BJ (cell line): ENCODE measurements at regions of chr3 and their contacts with region 1.

Region 1: DNA sequence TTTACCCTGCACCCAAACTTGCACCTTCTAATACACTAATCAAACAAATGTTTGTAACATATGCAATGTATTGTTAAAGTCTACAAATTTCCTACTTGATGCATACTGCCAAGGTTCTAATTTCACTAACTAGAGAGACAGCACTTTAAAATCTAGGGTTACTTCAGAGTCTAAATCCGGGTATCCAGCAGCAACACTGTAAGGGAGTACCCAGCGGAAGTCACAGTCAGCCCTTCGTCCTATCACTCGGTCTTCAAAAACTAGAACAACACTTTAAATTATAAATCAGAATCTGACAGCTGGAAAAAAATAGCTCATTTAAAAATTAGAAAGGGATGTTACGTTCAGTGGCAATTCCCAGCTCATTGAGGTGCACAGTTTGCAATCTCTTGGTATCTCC is 8.3 kb downstream of the TNIK start:
- DNase-seq: no peak
- H3K4me3 ChIP-seq: no peak overlapping the region
- H3K27me3 ChIP-seq: no peaks in the 10 kb centered on the region
- CTCF ChIP-seq: no peak

Region 2: DNA sequence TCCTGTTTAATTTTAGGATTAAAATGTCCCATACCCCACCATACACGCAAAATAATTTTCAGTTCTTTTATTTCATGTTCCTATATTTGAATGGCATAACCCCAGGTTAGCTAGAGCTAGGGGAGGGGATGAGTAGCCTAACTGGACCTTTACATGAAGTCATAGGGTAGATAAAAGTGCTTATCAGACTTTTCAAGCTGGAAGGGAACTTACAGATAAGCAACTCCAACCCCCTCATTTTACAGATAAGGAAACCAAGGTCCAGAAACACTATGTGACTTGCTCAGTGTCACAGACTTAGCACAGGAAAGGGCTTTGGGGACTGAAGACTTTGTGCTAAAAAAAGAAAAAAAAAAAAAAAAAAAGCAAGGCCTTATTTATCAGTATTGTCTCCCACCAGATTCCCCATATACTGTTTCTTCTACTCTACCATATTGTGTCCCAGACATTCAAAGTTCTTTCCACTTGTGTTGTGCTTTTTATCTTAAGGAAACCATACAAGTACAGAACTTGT is 18.9 kb after region 1 on chr3:
- CTCF ChIA-PET with region 1: no interaction called
- POLR2A ChIA-PET with region 1: interaction called, 12 read pairs
- DNase-seq: no peak
- H3K4me3 ChIP-seq: no peak overlapping the region
- H3K27me3 ChIP-seq: no peaks in the 10 kb centered on the region
- CTCF ChIP-seq: no peak